Dendritic cell treated with granulocyte-macrophage colony-stimulating factor and Interleukin-4, amounts not matched to agents 40 ng/mL and 50 ng/mL, for 4 days (primary cell): ENCODE measurements at regions of chr16 and their contacts with region 1.

Region 1: DNA sequence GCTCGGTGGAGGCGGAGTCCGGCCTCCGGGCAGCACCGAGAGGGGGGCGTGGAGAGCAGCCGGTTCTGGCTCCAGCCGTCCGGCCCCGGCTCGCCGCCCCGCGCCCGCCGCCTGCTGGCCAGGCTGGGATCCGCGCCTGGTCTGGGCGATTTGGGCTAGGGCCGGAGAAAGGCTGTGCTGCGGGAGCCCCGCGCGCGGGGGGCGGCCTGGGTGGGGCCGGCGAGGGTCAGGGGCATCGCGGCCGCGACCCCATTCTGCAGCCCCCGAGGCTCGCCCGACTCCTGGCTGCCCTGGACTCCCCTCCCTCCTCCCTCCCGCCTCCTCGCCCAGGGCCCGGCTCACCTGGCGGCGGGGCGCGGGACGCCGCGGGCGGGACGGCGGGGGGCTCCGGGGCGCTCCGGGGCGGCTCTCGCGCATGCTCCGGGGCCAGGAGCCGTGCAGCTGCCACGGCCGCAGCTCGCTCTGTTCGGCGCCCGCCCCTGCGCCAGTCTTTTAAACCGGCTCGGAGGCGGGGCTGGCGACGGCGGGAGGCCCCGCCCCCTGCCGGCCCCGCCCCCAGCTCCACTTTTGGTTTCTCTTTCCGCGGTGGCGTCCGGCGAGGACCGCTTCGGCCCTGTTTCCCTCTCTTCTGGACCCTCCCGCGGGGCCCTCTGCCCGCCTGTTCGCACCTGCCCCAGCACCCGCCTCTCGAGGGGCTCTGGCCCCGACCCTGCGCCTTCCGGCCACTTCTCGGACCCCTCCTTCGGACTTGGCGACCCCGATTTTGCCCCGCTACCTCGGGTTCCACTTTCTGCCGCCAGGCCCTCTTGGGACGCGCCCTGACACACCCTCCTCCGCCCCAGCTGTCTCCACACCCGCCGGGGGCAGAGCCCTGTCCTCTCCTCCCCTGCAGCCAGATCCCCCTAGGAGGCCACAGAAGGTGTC is at the start of gene SOCS1:
- H3K4me3 Mint-ChIP-seq: peak within 1 kb of the TSS; percentile 99
- H3K27ac Mint-ChIP-seq: peak within 1 kb of the TSS; percentile 99
- H3K4me1 Mint-ChIP-seq: peaks cover 54% of the 10 kb centered on the region
- H3K27me3 Mint-ChIP-seq: peaks cover 11% of the 10 kb centered on the region

Region 2: GRCh38 chr16:10937068-10937859 is 318.7 kb before region 1 on chr16:
- intact Hi-C with region 1: no loop called
- H3K4me3 Mint-ChIP-seq: peak overlapping the region; percentile 37
- H3K27ac Mint-ChIP-seq: peak overlapping the region; percentile 80
- H3K4me1 Mint-ChIP-seq: peaks cover 79% of the 10 kb centered on the region
- H3K27me3 Mint-ChIP-seq: no peaks in the 10 kb centered on the region

Region 3: GRCh38 chr16:10964039-10964890 is 291.7 kb before region 1 on chr16:
- intact Hi-C with region 1: loop called (anchors 1 kb)
- H3K4me3 Mint-ChIP-seq: no peak overlapping the region
- H3K27ac Mint-ChIP-seq: peak overlapping the region; percentile 73
- H3K4me1 Mint-ChIP-seq: peaks cover 53% of the 10 kb centered on the region
- H3K27me3 Mint-ChIP-seq: no peaks in the 10 kb centered on the region

Region 4: GRCh38 chr16:11133344-11133943 is 122.6 kb before region 1 on chr16:
- intact Hi-C with region 1: loop called (anchors 10 kb)
- H3K4me3 Mint-ChIP-seq: peak overlapping the region; percentile 23
- H3K27ac Mint-ChIP-seq: peak overlapping the region; percentile 97
- H3K4me1 Mint-ChIP-seq: peaks cover 97% of the 10 kb centered on the region
- H3K27me3 Mint-ChIP-seq: no peaks in the 10 kb centered on the region

Region 5: GRCh38 chr16:11297492-11298142 is 41.6 kb after region 1 on chr16:
- intact Hi-C with region 1: loop called (anchors 5 kb)
- H3K4me3 Mint-ChIP-seq: peak overlapping the region; percentile 42
- H3K27ac Mint-ChIP-seq: peak overlapping the region; percentile 72
- H3K4me1 Mint-ChIP-seq: peaks cover 27% of the 10 kb centered on the region
- H3K27me3 Mint-ChIP-seq: peaks cover 35% of the 10 kb centered on the region

Region 6: DNA sequence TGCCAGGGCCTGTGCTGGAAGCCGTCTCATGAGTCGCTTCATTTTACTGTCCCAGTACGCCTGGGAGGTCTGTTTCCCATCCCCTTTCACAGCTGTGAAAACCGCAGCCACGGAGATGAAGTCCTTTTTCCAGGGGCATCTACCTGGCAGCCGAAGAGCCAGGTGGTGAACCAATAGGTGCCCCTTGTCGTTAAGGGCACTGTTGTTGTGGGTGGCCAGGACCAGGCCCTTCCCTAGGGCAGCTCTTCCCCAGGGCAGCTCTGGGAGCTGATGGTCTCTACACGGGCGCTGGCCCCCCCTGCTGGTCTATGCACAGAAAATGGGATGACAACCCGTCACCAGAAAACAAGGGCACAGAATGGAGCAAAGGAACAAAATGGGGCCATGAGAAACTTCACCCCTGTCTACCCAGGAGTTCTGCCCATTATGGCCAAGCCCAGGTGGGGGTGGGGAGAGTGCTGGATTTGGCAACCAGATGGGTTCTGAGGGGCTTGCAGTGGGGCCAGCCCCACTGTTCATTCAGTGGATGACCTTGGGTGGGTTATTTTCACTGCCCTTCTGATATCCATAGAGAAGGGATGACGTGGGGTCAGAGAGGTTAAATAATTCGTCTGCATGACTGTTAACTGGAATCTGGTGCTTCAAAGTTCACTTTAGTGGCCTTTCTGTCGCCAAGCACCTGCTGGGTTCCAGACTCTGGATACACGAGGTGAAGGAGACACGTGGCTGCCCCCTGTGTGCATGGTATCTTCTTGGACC is 100.8 kb after region 1 on chr16:
- intact Hi-C with region 1: loop called (anchors 1 kb)
- H3K4me3 Mint-ChIP-seq: peak overlapping the region; percentile 44
- H3K27ac Mint-ChIP-seq: peak overlapping the region; percentile 97
- H3K4me1 Mint-ChIP-seq: peaks cover 89% of the 10 kb centered on the region
- H3K27me3 Mint-ChIP-seq: peaks cover 22% of the 10 kb centered on the region